Mammary epithelial cell (primary cell): ENCODE measurements at regions of chr1 and their contacts with region 1.

Region 1: DNA sequence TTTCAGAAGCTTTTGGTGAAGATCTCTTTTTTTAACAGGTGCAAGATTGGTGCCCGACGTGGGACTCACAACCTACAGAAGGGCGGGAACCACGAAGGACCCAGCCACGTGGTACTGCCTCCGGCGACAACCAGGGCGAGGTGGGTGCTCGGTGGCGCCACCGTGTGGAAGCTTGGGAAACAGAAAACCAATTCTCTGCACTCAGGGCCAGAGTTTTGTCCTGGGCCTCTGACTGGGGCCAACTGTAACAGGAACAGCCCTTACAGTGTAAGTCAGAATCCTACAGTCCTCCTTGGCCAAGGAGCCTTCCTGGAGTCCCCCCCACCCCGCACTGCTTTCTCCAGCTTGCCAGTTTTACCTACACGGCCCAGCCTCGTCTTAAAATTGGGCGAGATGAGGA is 11.6 kb upstream of the S100A7A start:
- DNase-seq: peak; percentile 25
- H3K4me3 ChIP-seq: no peak overlapping the region
- H3K27ac ChIP-seq: no peak overlapping the region
- H3K4me1 ChIP-seq: no peaks in the 10 kb centered on the region
- H3K27me3 ChIP-seq: peaks cover 2% of the 10 kb centered on the region
- CTCF ChIP-seq: peak; percentile 61 to 70

Region 2: DNA sequence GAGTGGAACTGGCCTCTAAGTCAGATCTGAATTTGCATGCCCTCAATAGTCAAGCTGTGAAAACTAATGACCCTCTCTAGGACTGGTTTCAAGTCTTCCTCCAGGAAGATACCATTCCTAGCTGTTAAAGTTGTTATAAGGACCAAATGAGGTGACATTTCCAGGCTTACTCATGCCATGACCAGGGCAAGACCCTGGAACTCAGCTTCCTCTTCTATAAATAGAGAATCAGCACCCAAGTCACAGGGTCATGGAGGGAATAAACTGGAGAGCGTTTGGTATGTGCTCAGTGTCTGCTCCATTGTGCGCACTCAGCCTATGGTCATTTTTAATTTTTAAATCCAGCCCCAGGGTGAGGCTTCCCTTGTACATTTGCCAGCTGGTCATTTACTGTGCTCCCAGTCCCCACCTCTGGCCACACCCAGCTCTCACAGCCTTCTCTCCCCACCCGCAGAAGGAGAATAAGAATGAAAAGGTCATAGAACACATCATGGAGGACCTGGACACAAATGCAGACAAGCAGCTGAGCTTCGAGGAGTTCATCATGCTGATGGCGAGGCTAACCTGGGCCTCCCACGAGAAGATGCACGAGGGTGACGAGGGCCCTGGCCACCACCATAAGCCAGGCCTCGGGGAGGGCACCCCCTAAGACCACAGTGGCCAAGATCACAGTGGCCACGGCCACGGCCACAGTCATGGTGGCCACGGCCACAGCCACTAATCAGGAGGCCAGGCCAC is 44.4 kb before region 1 on chr1:
- CTCF ChIA-PET with region 1: no interaction called
- dilution Hi-C with region 1: loop called (anchors 5 kb)
- in situ Hi-C with region 1: loop called (anchors 5 to 10 kb)
- intact Hi-C with region 1: loop called (anchors 1 kb)
- DNase-seq: no peak
- H3K4me3 ChIP-seq: no peak overlapping the region
- H3K27ac ChIP-seq: no peak overlapping the region
- H3K4me1 ChIP-seq: peaks cover 34% of the 10 kb centered on the region
- H3K27me3 ChIP-seq: no peaks in the 10 kb centered on the region
- CTCF ChIP-seq: no peak

Region 3: GRCh38 chr1:153494976-153495535 is 90.3 kb after region 1 on chr1:
- CTCF ChIA-PET with region 1: interaction called, 5 read pairs
- dilution Hi-C with region 1: no loop called
- in situ Hi-C with region 1: no loop called
- intact Hi-C with region 1: loop called (anchors 1 kb)
- DNase-seq: no peak
- H3K4me3 ChIP-seq: no peak overlapping the region
- H3K27ac ChIP-seq: no peak overlapping the region
- H3K4me1 ChIP-seq: peaks cover 36% of the 10 kb centered on the region
- H3K27me3 ChIP-seq: no peaks in the 10 kb centered on the region
- CTCF ChIP-seq: peak; percentile 65 to 90